Caco-2 (cell line): ENCODE measurements at regions of chr3 and their contacts with region 1.

Region 1: GRCh38 chr3:155323063-155323666 is 29.7 kb upstream of the STRIT1 start:
- DNase-seq: peak; percentile 41 to 48
- H3K4me3 ChIP-seq: no peak overlapping the region
- H3K4me3 Mint-ChIP-seq: no peak overlapping the region
- H3K27ac Mint-ChIP-seq: no peak overlapping the region
- H3K4me1 ChIP-seq: no peaks in the 10 kb centered on the region
- H3K4me1 Mint-ChIP-seq: no peaks in the 10 kb centered on the region
- H3K27me3 ChIP-seq: no peaks in the 10 kb centered on the region
- H3K27me3 Mint-ChIP-seq: no peaks in the 10 kb centered on the region
- CTCF ChIP-seq: peak; percentile 63 to 64

Region 2: GRCh38 chr3:154758109-154758868 is 564.9 kb before region 1 on chr3:
- CTCF ChIA-PET with region 1: no interaction called
- POLR2A ChIA-PET with region 1: no interaction called
- intact Hi-C with region 1: loop called (anchors 1 kb)
- DNase-seq: no peak
- H3K4me3 ChIP-seq: no peak overlapping the region
- H3K4me3 Mint-ChIP-seq: no peak overlapping the region
- H3K27ac Mint-ChIP-seq: no peak overlapping the region
- H3K4me1 ChIP-seq: no peaks in the 10 kb centered on the region
- H3K4me1 Mint-ChIP-seq: no peaks in the 10 kb centered on the region
- H3K27me3 ChIP-seq: no peaks in the 10 kb centered on the region
- H3K27me3 Mint-ChIP-seq: no peaks in the 10 kb centered on the region
- CTCF ChIP-seq: peak in 1 of 2 experiments; percentile 23

Region 3: GRCh38 chr3:154954753-154955152 is 368.4 kb before region 1 on chr3:
- CTCF ChIA-PET with region 1: no interaction called
- POLR2A ChIA-PET with region 1: no interaction called
- intact Hi-C with region 1: loop called (anchors 1 kb)
- DNase-seq: no peak
- H3K4me3 ChIP-seq: no peak overlapping the region
- H3K4me3 Mint-ChIP-seq: no peak overlapping the region
- H3K27ac Mint-ChIP-seq: no peak overlapping the region
- H3K4me1 ChIP-seq: no peaks in the 10 kb centered on the region
- H3K4me1 Mint-ChIP-seq: no peaks in the 10 kb centered on the region
- H3K27me3 ChIP-seq: no peaks in the 10 kb centered on the region
- H3K27me3 Mint-ChIP-seq: no peaks in the 10 kb centered on the region
- CTCF ChIP-seq: peak in 1 of 2 experiments; percentile 31

Region 4: GRCh38 chr3:155079746-155080487 is 243.2 kb before region 1 on chr3 and contains the start of gene MME:
- CTCF ChIA-PET with region 1: no interaction called
- POLR2A ChIA-PET with region 1: no interaction called
- intact Hi-C with region 1: loop called (anchors 10 kb)
- DNase-seq: peak; percentile 32 to 40
- H3K4me3 ChIP-seq: peak within 1 kb of the TSS; percentile 30
- H3K4me3 Mint-ChIP-seq: peak within 1 kb of the TSS; percentile 67
- H3K27ac Mint-ChIP-seq: no peak within 1 kb of the TSS
- H3K4me1 ChIP-seq: peaks cover 6% of the 10 kb centered on the region; the same call in 1 of the 2 replicates
- H3K4me1 Mint-ChIP-seq: peaks cover 15% of the 10 kb centered on the region
- H3K27me3 ChIP-seq: peaks cover 1% of the 10 kb centered on the region; the same call in 1 of the 2 replicates
- H3K27me3 Mint-ChIP-seq: peaks cover 19% of the 10 kb centered on the region
- CTCF ChIP-seq: no peak
- total RNA-seq, gene MME: 0.52 and 1.8 TPM in 2 replicates

Region 5: DNA sequence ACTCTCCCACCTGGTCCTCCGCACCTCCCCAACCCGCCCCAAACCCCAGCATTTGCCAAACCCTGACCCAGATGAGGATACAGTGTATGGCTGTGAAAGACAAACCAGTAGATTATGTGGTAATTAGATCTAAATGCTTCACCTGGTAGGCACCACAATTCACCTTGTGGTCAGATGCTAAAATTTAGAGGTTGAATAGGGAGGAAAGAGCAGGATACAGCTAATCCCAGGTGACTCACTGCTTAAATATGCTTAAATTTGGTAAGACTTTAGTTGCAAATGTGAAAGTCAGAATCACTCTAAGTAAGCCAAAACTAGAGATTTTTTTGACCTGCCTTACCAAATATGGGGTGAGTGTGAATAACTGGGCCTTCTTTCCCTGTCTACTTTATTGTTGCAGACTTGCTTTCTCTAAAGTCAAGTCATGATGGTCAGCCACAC is 137.5 kb before region 1 on chr3:
- CTCF ChIA-PET with region 1: no interaction called
- POLR2A ChIA-PET with region 1: no interaction called
- intact Hi-C with region 1: loop called (anchors 10 kb)
- DNase-seq: no peak
- H3K4me3 ChIP-seq: no peak overlapping the region
- H3K4me3 Mint-ChIP-seq: no peak overlapping the region
- H3K27ac Mint-ChIP-seq: no peak overlapping the region
- H3K4me1 ChIP-seq: no peaks in the 10 kb centered on the region
- H3K4me1 Mint-ChIP-seq: no peaks in the 10 kb centered on the region
- H3K27me3 ChIP-seq: no peaks in the 10 kb centered on the region
- H3K27me3 Mint-ChIP-seq: no peaks in the 10 kb centered on the region
- CTCF ChIP-seq: no peak

Region 6: GRCh38 chr3:155391551-155391958 is 68.4 kb after region 1 on chr3:
- CTCF ChIA-PET with region 1: no interaction called
- POLR2A ChIA-PET with region 1: no interaction called
- intact Hi-C with region 1: no loop called
- DNase-seq: peak in 1 of 2 experiments; percentile 11
- H3K4me3 ChIP-seq: no peak overlapping the region
- H3K4me3 Mint-ChIP-seq: no peak overlapping the region
- H3K27ac Mint-ChIP-seq: no peak overlapping the region
- H3K4me1 ChIP-seq: peaks cover 8% of the 10 kb centered on the region; the same call in 1 of the 2 replicates
- H3K4me1 Mint-ChIP-seq: no peaks in the 10 kb centered on the region
- H3K27me3 ChIP-seq: no peaks in the 10 kb centered on the region
- H3K27me3 Mint-ChIP-seq: peaks cover 4% of the 10 kb centered on the region
- CTCF ChIP-seq: no peak

Region 7: DNA sequence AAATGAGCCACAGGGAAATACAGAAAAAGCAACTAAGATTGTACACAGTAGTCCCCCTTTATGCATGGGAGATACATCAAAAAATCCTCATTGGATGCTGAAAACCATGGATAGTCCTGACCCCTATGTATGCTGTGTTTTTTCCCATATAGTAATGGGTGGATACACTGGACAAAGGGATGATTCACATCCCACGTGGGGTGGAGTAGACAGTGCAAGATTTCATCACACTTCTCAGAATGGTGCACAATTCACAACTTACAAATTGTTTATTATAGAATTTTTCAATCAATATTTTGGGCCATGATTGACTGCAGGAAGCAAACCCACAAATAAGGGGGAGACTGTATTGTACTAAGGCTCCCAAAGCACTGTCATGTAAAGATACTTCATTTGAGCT is 194.7 kb after region 1 on chr3:
- CTCF ChIA-PET with region 1: no interaction called
- POLR2A ChIA-PET with region 1: no interaction called
- intact Hi-C with region 1: no loop called
- DNase-seq: no peak
- H3K4me3 ChIP-seq: no peak overlapping the region
- H3K4me3 Mint-ChIP-seq: no peak overlapping the region
- H3K27ac Mint-ChIP-seq: no peak overlapping the region
- H3K4me1 ChIP-seq: no peaks in the 10 kb centered on the region
- H3K4me1 Mint-ChIP-seq: no peaks in the 10 kb centered on the region
- H3K27me3 ChIP-seq: no peaks in the 10 kb centered on the region
- H3K27me3 Mint-ChIP-seq: no peaks in the 10 kb centered on the region
- CTCF ChIP-seq: no peak

Region 8: GRCh38 chr3:155631323-155632019 is 308.3 kb after region 1 on chr3:
- CTCF ChIA-PET with region 1: no interaction called
- POLR2A ChIA-PET with region 1: no interaction called
- intact Hi-C with region 1: no loop called
- DNase-seq: no peak
- H3K4me3 ChIP-seq: no peak overlapping the region
- H3K4me3 Mint-ChIP-seq: no peak overlapping the region
- H3K27ac Mint-ChIP-seq: no peak overlapping the region
- H3K4me1 ChIP-seq: no peaks in the 10 kb centered on the region
- H3K4me1 Mint-ChIP-seq: no peaks in the 10 kb centered on the region
- H3K27me3 ChIP-seq: no peaks in the 10 kb centered on the region
- H3K27me3 Mint-ChIP-seq: no peaks in the 10 kb centered on the region
- CTCF ChIP-seq: no peak